Activated CD4-positive, alpha-beta memory T cell treated with anti-CD3 and anti-CD28 coated beads for 36 hours (primary cell): ENCODE measurements at regions of chr15 and their contacts with region 1.

Region 1: GRCh38 chr15:63238796-63239195 is 38.6 kb upstream of the APH1B start:
- DNase-seq: peak; percentile 57
- H3K4me3 Mint-ChIP-seq: no peak overlapping the region
- H3K27ac Mint-ChIP-seq: no peak overlapping the region
- H3K4me1 Mint-ChIP-seq: peaks cover 68% of the 10 kb centered on the region
- H3K27me3 Mint-ChIP-seq: no peaks in the 10 kb centered on the region

Region 2: DNA sequence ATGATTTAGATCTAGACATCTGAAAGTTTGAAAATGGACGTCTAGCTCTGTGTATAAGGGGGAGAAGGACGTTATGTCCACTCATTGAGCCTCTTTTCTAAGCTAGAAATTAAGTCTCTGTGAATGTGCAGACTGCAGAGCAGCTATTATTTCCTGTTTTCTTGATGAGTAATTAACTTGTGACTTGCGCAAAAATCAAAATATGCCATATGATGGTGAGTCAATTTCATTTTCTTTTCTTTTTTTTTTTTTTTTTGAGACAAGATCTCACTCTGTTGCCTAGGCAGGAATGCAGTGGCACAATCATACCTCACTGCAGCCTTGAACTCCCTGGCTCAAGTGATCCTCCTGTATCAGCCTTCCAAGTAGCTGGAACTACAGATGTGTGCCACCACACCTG is 103.0 kb before region 1 on chr15:
- CTCF ChIA-PET with region 1: no interaction called
- POLR2A ChIA-PET with region 1: no interaction called
- intact Hi-C with region 1: no loop called
- DNase-seq: no peak
- H3K4me3 Mint-ChIP-seq: no peak overlapping the region
- H3K27ac Mint-ChIP-seq: no peak overlapping the region
- H3K4me1 Mint-ChIP-seq: peaks cover 12% of the 10 kb centered on the region
- H3K27me3 Mint-ChIP-seq: no peaks in the 10 kb centered on the region

Region 3: GRCh38 chr15:63172376-63173109 is 66.3 kb before region 1 on chr15:
- CTCF ChIA-PET with region 1: no interaction called
- POLR2A ChIA-PET with region 1: interaction called, 4 read pairs
- intact Hi-C with region 1: loop called (anchors 2 kb)
- DNase-seq: no peak
- H3K4me3 Mint-ChIP-seq: no peak overlapping the region
- H3K27ac Mint-ChIP-seq: no peak overlapping the region
- H3K4me1 Mint-ChIP-seq: peaks cover 11% of the 10 kb centered on the region
- H3K27me3 Mint-ChIP-seq: no peaks in the 10 kb centered on the region

Region 4: DNA sequence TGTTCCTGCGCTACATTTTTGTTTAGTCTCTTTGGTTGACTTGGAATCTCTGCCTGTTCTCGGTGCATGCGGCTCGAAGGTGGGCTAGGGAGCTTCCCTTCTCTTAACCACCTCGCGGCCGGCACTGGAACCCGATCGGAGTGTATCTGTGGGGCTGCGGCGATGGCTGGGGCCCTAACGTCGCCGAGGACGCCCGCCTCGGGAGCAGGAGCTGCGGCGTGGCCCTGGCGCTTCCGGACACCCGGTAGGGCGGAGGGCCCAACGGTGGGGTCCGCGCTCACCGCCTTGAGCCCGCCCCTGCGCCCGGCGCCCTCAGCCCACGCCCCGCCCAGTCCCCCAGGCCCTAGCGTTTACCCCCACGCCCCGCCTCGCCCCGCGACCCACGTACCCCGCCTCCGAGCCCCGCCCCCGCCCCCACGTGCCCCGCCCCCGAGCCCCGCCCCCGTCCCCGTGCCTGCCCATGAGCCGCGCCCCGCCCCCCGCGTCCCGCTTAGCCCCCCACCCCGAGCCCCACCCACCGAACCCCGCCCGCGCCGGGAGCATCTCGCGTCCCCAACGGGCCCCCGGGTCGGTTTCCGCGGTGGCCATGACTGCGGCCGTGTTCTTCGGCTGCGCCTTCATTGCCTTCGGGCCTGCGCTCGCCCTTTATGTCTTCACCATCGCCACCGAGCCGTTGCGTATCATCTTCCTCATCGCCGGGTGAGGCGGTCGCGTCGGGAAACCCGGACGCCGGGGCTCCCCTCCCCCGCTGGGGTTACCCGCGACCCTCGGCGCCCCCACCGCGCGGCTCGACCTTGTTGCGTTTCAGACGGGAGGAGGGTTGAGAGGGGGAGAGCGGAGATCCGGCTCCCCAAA is 38.5 kb after region 1 on chr15 and contains the start of gene APH1B:
- CTCF ChIA-PET with region 1: no interaction called
- POLR2A ChIA-PET with region 1: no interaction called
- intact Hi-C with region 1: loop called (anchors 5 kb)
- DNase-seq: peak; percentile 80
- H3K4me3 Mint-ChIP-seq: peak within 1 kb of the TSS; percentile 80
- H3K27ac Mint-ChIP-seq: peak within 1 kb of the TSS; percentile 59
- H3K4me1 Mint-ChIP-seq: peaks cover 20% of the 10 kb centered on the region
- H3K27me3 Mint-ChIP-seq: no peaks in the 10 kb centered on the region
- total RNA-seq, gene APH1B: 6.6 to 7.0 TPM